ENCODE measurements at regions of chr2 and their contacts with region 1.

Region 1: GRCh38 chr2:68467077-68467960 is at the starts of genes APLF and FBXO48:
- DNase-seq: peak; percentile 99
- H3K4me3 Mint-ChIP-seq: peak within 1 kb of the TSS; percentile 94
- H3K27ac Mint-ChIP-seq: peak within 1 kb of the TSS; percentile 93
- H3K4me1 Mint-ChIP-seq: peaks cover 40% of the 10 kb centered on the region
- H3K27me3 Mint-ChIP-seq: no peaks in the 10 kb centered on the region
- total RNA-seq, gene APLF: 2.4 to 2.7 TPM
- total RNA-seq, gene FBXO48: 1.1 to 1.2 TPM

Region 2: DNA sequence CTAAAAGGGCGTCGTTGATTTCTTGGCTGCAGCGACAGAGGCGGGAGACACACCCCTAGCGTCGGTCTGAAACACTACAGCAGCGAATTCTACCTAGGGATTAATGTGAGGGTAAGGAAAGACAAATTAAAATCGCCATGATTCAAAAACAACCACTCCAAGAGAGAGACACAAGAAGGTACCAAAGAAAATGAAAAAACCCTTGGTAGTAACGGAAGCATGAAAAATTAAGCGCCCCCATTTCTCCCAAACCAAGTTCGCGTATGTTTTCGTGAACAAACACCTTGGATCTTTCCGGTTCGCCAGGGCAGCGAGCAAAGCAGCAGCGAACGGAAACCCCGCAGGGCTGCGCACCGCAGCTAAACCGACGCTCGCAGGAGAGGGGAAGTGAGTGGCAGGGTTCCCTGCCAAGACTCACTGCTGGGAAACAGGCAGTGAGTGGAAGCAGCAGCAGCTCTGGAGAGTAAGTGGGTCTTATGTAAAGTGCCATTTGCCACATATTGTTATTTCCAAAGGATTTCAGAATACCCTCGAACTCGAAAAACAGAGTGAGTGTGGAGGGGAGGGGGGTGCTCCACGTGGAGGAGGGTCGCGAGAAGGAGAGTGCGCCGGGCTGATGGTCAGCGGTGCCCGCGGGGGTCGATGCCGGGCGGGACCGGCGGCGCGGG is 216.0 kb before region 1 on chr2:
- CTCF ChIA-PET with region 1: interaction called, 3 read pairs
- intact Hi-C with region 1: loop called (anchors 1 kb)
- DNase-seq: peak; percentile 90
- H3K4me3 Mint-ChIP-seq: peak overlapping the region; percentile 97
- H3K27ac Mint-ChIP-seq: peak overlapping the region; percentile 94
- H3K4me1 Mint-ChIP-seq: peaks cover 38% of the 10 kb centered on the region
- H3K27me3 Mint-ChIP-seq: no peaks in the 10 kb centered on the region

Region 3: GRCh38 chr2:68452168-68452900 is 15.0 kb before region 1 on chr2:
- CTCF ChIA-PET with region 1: interaction called, 21 read pairs
- intact Hi-C with region 1: no loop called
- DNase-seq: no peak
- H3K4me3 Mint-ChIP-seq: no peak overlapping the region
- H3K27ac Mint-ChIP-seq: no peak overlapping the region
- H3K4me1 Mint-ChIP-seq: peaks cover 10% of the 10 kb centered on the region
- H3K27me3 Mint-ChIP-seq: no peaks in the 10 kb centered on the region

Region 4: DNA sequence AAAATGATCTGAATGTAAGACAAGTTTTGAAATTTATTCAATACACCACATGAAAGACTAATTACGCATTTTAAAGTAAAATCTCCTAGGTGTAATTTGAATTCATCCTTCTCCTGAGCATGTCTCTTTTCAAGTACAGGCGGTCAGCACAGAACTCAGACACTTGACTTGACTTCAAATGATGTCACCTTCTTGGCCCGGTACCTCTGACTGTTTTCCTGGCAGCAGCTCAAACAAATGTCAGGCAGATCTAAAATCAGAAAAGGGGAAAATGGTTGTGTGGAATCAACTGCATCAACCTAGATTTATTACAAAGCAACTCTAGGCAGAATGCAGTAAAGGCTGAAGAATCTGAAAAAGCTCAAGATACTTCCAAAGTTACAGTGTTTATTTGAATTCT is 164.7 kb after region 1 on chr2:
- CTCF ChIA-PET with region 1: no interaction called
- intact Hi-C with region 1: no loop called
- DNase-seq: no peak
- H3K4me3 Mint-ChIP-seq: no peak overlapping the region
- H3K27ac Mint-ChIP-seq: no peak overlapping the region
- H3K4me1 Mint-ChIP-seq: no peaks in the 10 kb centered on the region
- H3K27me3 Mint-ChIP-seq: peaks cover 7% of the 10 kb centered on the region

Region 5: DNA sequence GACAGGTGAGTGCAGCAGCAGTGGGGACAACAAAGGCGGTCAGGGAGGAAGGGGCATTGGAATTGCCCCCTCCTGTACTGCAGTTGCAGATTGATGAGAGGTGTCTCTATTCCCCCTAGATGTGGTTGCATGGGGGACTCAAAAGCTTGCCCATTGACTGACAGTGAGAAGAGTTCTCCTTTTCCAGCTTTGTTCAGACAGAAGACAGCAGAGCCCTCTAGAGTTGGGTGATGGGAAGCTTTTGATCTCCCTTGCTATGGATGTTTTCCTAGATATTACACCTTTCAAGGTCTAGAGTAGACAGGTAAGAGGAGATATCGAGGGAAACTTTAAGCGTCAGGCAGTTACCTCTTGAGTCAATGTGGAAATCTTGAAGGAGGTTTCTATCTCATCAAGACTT is 179.0 kb after region 1 on chr2:
- CTCF ChIA-PET with region 1: interaction called, 3 read pairs
- intact Hi-C with region 1: loop called (anchors 1 kb)
- DNase-seq: no peak
- H3K4me3 Mint-ChIP-seq: no peak overlapping the region
- H3K27ac Mint-ChIP-seq: no peak overlapping the region
- H3K4me1 Mint-ChIP-seq: peaks cover 18% of the 10 kb centered on the region
- H3K27me3 Mint-ChIP-seq: peaks cover 59% of the 10 kb centered on the region

Region 6: GRCh38 chr2:68715353-68716041 is 248.2 kb after region 1 on chr2:
- CTCF ChIA-PET with region 1: interaction called, 29 read pairs
- intact Hi-C with region 1: loop called (anchors 1 kb)
- DNase-seq: peak; percentile 72
- H3K4me3 Mint-ChIP-seq: no peak overlapping the region
- H3K27ac Mint-ChIP-seq: peak overlapping the region; percentile 83
- H3K4me1 Mint-ChIP-seq: peaks cover 73% of the 10 kb centered on the region
- H3K27me3 Mint-ChIP-seq: no peaks in the 10 kb centered on the region

Region 7: DNA sequence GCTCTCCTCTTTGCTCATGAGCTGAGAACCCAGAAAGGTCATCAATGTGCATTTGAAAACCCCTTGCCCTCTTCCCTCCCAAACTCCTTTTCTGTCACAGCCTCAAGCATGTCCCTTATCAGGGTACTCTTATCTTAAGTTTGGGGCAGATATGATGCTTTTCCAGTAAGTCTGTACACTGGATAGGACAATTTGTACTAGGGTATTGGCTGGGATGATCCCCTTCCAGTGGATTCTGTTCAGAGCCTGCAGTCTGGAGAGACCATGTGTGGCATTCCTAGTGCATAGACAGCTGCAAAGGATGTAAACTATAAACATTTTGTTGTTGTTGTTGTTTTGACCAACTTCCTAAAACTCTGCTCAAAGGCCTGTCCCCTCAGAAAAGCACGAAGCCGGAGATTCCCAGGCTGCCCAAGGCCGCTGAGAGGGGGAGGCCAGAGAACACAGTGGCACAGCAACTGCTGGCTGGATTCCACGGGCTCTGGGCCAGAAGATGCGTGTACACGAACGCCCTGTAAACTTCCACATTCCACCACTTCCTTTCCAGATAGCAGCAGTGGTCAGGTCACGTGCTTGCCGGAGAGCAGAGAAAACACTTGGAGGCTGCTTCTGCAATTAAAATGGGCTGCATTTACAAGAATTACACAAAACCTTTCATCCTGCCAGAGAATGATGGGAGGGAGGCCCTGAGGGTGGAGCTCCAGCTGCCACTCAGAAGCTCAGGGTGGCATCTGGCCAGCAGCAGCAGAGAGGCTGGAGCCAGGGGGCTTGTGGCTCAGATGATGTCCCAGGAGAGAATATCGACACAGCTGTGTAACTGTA is 361.8 kb after region 1 on chr2:
- CTCF ChIA-PET with region 1: interaction called, 4 read pairs
- intact Hi-C with region 1: loop called (anchors 1 kb)
- DNase-seq: peak; percentile 85
- H3K4me3 Mint-ChIP-seq: peak overlapping the region; percentile 22
- H3K27ac Mint-ChIP-seq: peak overlapping the region; percentile 77
- H3K4me1 Mint-ChIP-seq: peaks cover 60% of the 10 kb centered on the region
- H3K27me3 Mint-ChIP-seq: no peaks in the 10 kb centered on the region

Region 8: GRCh38 chr2:69095305-69095704 is 628.0 kb after region 1 on chr2:
- CTCF ChIA-PET with region 1: no interaction called
- intact Hi-C with region 1: no loop called
- DNase-seq: no peak
- H3K4me3 Mint-ChIP-seq: no peak overlapping the region
- H3K27ac Mint-ChIP-seq: no peak overlapping the region
- H3K4me1 Mint-ChIP-seq: no peaks in the 10 kb centered on the region
- H3K27me3 Mint-ChIP-seq: peaks cover 4% of the 10 kb centered on the region

Region 9: GRCh38 chr2:69306822-69307578 is 839.7 kb after region 1 on chr2:
- CTCF ChIA-PET with region 1: no interaction called
- intact Hi-C with region 1: loop called (anchors 2 kb)
- DNase-seq: peak; percentile 76
- H3K4me3 Mint-ChIP-seq: peak overlapping the region; percentile 67
- H3K27ac Mint-ChIP-seq: no peak overlapping the region
- H3K4me1 Mint-ChIP-seq: peaks cover 2% of the 10 kb centered on the region
- H3K27me3 Mint-ChIP-seq: peaks cover 20% of the 10 kb centered on the region

Measured in activated naive CD4-positive, alpha-beta T cell treated with anti-CD3 and anti-CD28 coated beads for 36 hours (primary cell).